ENCODE measurements at regions of chr15 and their contacts with region 1.

Region 1: GRCh38 chr15:72685925-72686794 is at the starts of genes BBS4 and HIGD2B:
- DNase-seq: peak; percentile 87
- ATAC-seq: peak; percentile 98
- H3K4me3 ChIP-seq: peak within 1 kb of the TSS; percentile 68 to 98 (median 90)
- H3K27ac ChIP-seq: peak within 1 kb of the TSS; percentile 91
- H3K4me1 ChIP-seq: peaks cover 11% of the 10 kb centered on the region; the same call in 1 of the 2 replicates
- H3K27me3 ChIP-seq: no peaks in the 10 kb centered on the region; a peak in 2 of 5 replicates
- CTCF ChIP-seq: no peak
- EP300 ChIP-seq: no peak
- POLR2A ChIP-seq: peak; percentile 83 to 92
- RAD21 ChIP-seq: no peak
- total RNA-seq, gene BBS4: 16.0 and 17.4 TPM in 2 replicates
- total RNA-seq, gene HIGD2B: not detected in 2 replicates

Region 2: GRCh38 chr15:72482275-72482674 is 203.9 kb before region 1 on chr15:
- CTCF ChIA-PET with region 1: no interaction called
- POLR2A ChIA-PET with region 1: no interaction called
- in situ Hi-C with region 1: no loop called
- intact Hi-C with region 1: no loop called
- DNase-seq: no peak
- ATAC-seq: no peak
- H3K4me3 ChIP-seq: no peak overlapping the region
- H3K27ac ChIP-seq: no peak overlapping the region
- H3K4me1 ChIP-seq: peaks cover 23% of the 10 kb centered on the region
- H3K27me3 ChIP-seq: no peaks in the 10 kb centered on the region
- CTCF ChIP-seq: no peak
- EP300 ChIP-seq: no peak
- POLR2A ChIP-seq: no peak
- RAD21 ChIP-seq: no peak

Region 3: DNA sequence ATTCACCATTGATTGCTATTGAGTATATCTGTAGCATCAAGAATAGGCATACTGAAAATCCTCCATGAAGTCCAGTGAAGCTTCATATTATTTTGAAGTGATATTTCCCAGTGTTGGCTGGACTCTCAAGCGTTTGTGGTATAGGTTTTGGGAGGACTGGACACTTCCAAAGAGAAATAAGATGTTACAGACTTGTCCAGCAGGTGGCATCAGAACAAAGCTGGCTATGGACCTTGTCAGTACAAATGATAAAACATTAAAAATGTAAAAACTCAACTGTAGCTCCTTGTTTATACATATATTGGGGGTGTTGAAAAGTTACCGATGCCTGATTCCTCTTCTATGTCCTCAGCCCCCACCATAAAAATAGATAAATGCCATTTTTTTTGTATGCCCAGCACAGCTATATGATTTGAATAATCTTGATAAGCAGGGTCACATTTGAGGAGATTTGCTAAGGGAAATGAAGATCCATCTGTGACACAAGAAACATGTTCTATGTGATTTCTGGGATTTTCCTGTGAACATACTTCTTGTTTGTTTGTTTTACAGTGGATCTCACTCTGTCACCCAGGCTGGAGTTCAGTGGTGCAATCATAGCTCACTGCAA is 86.2 kb before region 1 on chr15:
- CTCF ChIA-PET with region 1: no interaction called
- POLR2A ChIA-PET with region 1: interaction called, 3 read pairs
- in situ Hi-C with region 1: loop called (anchors 10 kb)
- intact Hi-C with region 1: loop called (anchors 5 kb)
- DNase-seq: peak; percentile 37
- ATAC-seq: peak; percentile 71
- H3K4me3 ChIP-seq: no peak overlapping the region
- H3K27ac ChIP-seq: no peak overlapping the region
- H3K4me1 ChIP-seq: peaks cover 6% of the 10 kb centered on the region; the same call in 1 of the 2 replicates
- H3K27me3 ChIP-seq: no peaks in the 10 kb centered on the region
- CTCF ChIP-seq: peak; percentile 73
- EP300 ChIP-seq: no peak
- POLR2A ChIP-seq: no peak
- RAD21 ChIP-seq: peak; percentile 38; the same call in 1 of the 2 replicates